ENCODE measurements at regions of chr4 and their contacts with region 1.

Region 1: GRCh38 chr4:87006676-87007527 is 72.1 kb downstream of the AFF1 start:
- DNase-seq: peak; percentile 90
- ATAC-seq: peak; percentile 84
- H3K4me3 Mint-ChIP-seq: peak overlapping the region; percentile 90
- H3K27ac Mint-ChIP-seq: peak overlapping the region; percentile 93
- H3K4me1 Mint-ChIP-seq: peaks cover 47% of the 10 kb centered on the region
- H3K27me3 Mint-ChIP-seq: no peaks in the 10 kb centered on the region
- CTCF ChIP-seq: peak; percentile 49

Region 2: GRCh38 chr4:86934771-86935565 is 71.9 kb before region 1 on chr4 and contains the start of gene AFF1:
- CTCF ChIA-PET with region 1: interaction called, 40 read pairs
- POLR2A ChIA-PET with region 1: interaction called, 68 read pairs
- intact Hi-C with region 1: loop called (anchors 1 kb)
- DNase-seq: peak; percentile 92
- ATAC-seq: peak; percentile 83
- H3K4me3 Mint-ChIP-seq: peak within 1 kb of the TSS; percentile 90
- H3K27ac Mint-ChIP-seq: peak within 1 kb of the TSS; percentile 95
- H3K4me1 Mint-ChIP-seq: peaks cover 43% of the 10 kb centered on the region
- H3K27me3 Mint-ChIP-seq: no peaks in the 10 kb centered on the region
- CTCF ChIP-seq: peak; percentile 38
- total RNA-seq, gene AFF1: 40.3 to 45.4 TPM

Region 3: GRCh38 chr4:86961605-86962295 is 45.2 kb before region 1 on chr4:
- CTCF ChIA-PET with region 1: no interaction called
- POLR2A ChIA-PET with region 1: interaction called, 14 read pairs
- intact Hi-C with region 1: no loop called
- DNase-seq: peak; percentile 36
- ATAC-seq: peak; percentile 85
- H3K4me3 Mint-ChIP-seq: no peak overlapping the region
- H3K27ac Mint-ChIP-seq: peak overlapping the region; percentile 16
- H3K4me1 Mint-ChIP-seq: peaks cover 45% of the 10 kb centered on the region
- H3K27me3 Mint-ChIP-seq: no peaks in the 10 kb centered on the region
- CTCF ChIP-seq: no peak

Region 4: DNA sequence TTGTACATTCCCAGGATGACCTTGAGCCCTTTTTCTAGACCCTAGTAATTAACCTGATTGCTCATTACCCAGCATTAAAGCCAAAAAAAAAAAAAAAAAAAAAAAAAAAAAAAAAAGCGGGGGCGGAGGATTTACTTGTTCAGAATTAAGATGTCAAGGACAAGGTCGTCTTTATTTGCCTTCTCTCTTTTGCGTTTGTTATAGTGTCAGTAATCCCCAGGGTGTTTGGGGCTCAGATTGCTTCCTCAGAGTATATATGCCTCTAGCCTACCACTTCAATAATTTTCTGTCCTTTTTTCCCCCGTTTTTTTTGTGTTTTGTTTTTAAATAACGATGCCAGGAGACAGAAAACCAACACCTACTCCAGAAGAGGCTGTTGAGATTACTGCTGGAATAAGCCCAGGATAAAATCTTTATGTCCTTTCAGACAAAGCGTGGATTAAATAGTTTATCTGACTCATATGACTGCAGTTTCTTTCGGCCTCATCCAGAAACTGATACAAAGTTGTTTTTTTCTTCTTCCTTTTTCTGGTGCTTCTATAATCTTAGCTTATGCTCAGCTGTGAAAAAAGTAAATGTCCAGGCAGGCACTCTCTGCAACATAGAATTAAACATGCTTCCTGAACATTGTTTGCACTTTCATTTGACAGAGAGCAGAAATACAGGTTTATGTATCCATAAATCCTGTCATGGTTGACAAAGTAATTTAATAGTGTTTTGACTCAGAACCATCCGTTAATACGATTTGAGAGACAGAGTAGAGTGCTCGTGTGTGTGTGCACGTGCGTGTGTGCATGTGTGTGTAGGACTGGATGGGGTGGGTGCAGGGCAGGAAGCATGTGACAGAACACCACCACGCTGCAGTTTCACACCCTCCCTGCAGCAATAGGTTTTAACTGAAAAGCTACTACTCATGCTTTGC is 66.6 kb after region 1 on chr4:
- CTCF ChIA-PET with region 1: interaction called, 3 read pairs
- POLR2A ChIA-PET with region 1: interaction called, 5 read pairs
- intact Hi-C with region 1: loop called (anchors 2 kb)
- DNase-seq: peak; percentile 91
- ATAC-seq: peak; percentile 97
- H3K4me3 Mint-ChIP-seq: peak overlapping the region; percentile 77
- H3K27ac Mint-ChIP-seq: peak overlapping the region; percentile 91
- H3K4me1 Mint-ChIP-seq: peaks cover 43% of the 10 kb centered on the region
- H3K27me3 Mint-ChIP-seq: no peaks in the 10 kb centered on the region
- CTCF ChIP-seq: no peak

Measured in activated CD8-positive, alpha-beta T cell treated with anti-CD3 and anti-CD28 coated beads for 36 hours (primary cell).